Activated CD4-positive, alpha-beta memory T cell treated with anti-CD3 and anti-CD28 coated beads, Interleukin-2, amount 10 ng/mL, durations not matched to agents 7 days and 5 days (primary cell): ENCODE measurements at regions of chr20 and their contacts with region 1.

Region 1: GRCh38 chr20:40990542-40991120 is 38.0 kb upstream of the TOP1 start:
- DNase-seq: peak; percentile 78
- H3K4me3 Mint-ChIP-seq: no peak overlapping the region
- H3K27ac Mint-ChIP-seq: peak overlapping the region; percentile 63
- H3K4me1 Mint-ChIP-seq: peaks cover 39% of the 10 kb centered on the region
- H3K27me3 Mint-ChIP-seq: no peaks in the 10 kb centered on the region

Region 2: DNA sequence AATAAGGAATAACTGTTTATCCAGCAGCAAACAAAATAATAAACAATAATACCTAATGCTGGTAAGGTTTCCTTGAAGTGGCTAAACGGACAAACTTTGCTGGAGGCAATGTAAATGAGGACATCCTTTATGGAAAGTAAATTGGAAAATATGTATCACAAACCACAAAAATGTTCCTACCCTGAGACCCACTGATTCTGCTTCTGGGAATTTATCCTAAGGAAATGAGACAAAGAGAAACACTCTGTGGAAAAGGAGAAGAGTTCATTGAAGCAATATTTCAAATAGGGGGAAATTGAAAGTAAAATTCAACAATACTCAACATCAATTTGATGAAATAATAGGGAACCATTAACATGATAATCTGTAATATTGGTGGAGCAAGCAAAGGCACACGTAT is 339.5 kb before region 1 on chr20:
- CTCF ChIA-PET with region 1: no interaction called
- POLR2A ChIA-PET with region 1: no interaction called
- DNase-seq: no peak
- H3K4me3 Mint-ChIP-seq: no peak overlapping the region
- H3K27ac Mint-ChIP-seq: no peak overlapping the region
- H3K4me1 Mint-ChIP-seq: no peaks in the 10 kb centered on the region
- H3K27me3 Mint-ChIP-seq: peaks cover 2% of the 10 kb centered on the region

Region 3: DNA sequence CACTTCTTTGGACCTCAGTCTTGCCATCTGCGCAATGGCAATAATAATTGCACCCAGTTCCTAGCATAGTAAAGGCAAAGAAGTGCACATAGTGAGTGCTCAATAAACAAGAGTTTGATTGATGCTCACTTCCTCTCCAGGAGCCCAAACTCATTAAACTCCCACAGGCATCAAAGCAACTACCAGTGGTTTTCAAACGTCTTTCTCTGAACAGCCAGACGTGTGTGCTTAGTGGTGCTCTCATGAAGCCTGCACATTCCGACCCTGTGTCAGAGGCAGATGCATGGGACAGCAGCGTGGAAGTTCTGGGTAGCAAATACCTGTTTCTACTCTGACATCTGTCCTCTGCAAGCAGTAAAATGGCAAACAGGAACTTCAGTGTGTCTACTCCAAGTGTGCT is 155.3 kb before region 1 on chr20:
- CTCF ChIA-PET with region 1: no interaction called
- POLR2A ChIA-PET with region 1: no interaction called
- DNase-seq: no peak
- H3K4me3 Mint-ChIP-seq: no peak overlapping the region
- H3K27ac Mint-ChIP-seq: no peak overlapping the region
- H3K4me1 Mint-ChIP-seq: no peaks in the 10 kb centered on the region
- H3K27me3 Mint-ChIP-seq: peaks cover 12% of the 10 kb centered on the region

Region 4: DNA sequence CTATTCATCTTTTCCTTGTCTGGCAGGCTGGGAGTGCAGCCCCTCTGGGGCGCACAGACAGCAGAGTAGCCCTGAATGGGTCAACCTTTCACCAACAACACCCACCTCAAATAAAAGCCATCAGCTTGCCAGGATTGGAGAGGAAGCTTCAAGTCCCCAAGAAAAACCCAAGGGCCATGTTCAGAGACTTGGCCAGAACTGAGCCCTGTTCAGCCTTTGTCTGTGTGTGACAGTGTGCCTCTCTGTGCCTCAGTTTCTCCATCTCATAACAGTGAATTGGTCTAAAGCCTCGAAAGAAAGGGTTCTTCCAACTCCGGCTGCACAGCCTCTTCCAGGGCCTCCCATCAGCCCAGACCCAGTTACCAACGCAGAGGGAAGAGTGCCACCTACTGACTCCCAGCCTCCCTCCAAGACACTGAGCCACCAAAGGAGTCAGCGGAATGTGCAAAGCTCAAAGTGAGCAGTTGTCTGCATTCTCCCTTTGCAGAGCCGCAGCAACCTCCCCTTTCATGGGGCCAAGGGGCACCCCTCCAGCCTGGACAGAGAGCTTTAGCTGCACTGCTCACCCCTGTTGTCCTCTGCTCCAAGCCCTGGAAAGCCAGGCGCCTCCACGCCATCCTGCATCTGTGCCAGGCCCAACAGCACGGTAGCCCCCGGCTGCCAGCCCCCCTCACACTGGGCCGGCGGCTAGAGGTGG is 44.7 kb before region 1 on chr20:
- CTCF ChIA-PET with region 1: no interaction called
- POLR2A ChIA-PET with region 1: no interaction called
- DNase-seq: no peak
- H3K4me3 Mint-ChIP-seq: no peak overlapping the region
- H3K27ac Mint-ChIP-seq: no peak overlapping the region
- H3K4me1 Mint-ChIP-seq: no peaks in the 10 kb centered on the region
- H3K27me3 Mint-ChIP-seq: peaks cover 16% of the 10 kb centered on the region

Region 5: GRCh38 chr20:41003143-41003883 is 12.7 kb after region 1 on chr20:
- CTCF ChIA-PET with region 1: interaction called, 37 read pairs
- POLR2A ChIA-PET with region 1: interaction called, 13 read pairs
- DNase-seq: peak; percentile 78
- H3K4me3 Mint-ChIP-seq: peak overlapping the region; percentile 54
- H3K27ac Mint-ChIP-seq: peak overlapping the region; percentile 99
- H3K4me1 Mint-ChIP-seq: peaks cover 51% of the 10 kb centered on the region
- H3K27me3 Mint-ChIP-seq: no peaks in the 10 kb centered on the region

Region 6: GRCh38 chr20:41038878-41039404 is 48.3 kb after region 1 on chr20:
- CTCF ChIA-PET with region 1: interaction called, 36 read pairs
- POLR2A ChIA-PET with region 1: interaction called, 4 read pairs
- DNase-seq: no peak
- H3K4me3 Mint-ChIP-seq: no peak overlapping the region
- H3K27ac Mint-ChIP-seq: no peak overlapping the region
- H3K4me1 Mint-ChIP-seq: peaks cover 90% of the 10 kb centered on the region
- H3K27me3 Mint-ChIP-seq: no peaks in the 10 kb centered on the region

Region 7: GRCh38 chr20:41078329-41078728 is 87.7 kb after region 1 on chr20:
- CTCF ChIA-PET with region 1: interaction called, 74 read pairs
- POLR2A ChIA-PET with region 1: interaction called, 3 read pairs
- DNase-seq: no peak
- H3K4me3 Mint-ChIP-seq: no peak overlapping the region
- H3K27ac Mint-ChIP-seq: peak overlapping the region; percentile 30
- H3K4me1 Mint-ChIP-seq: peaks cover 65% of the 10 kb centered on the region
- H3K27me3 Mint-ChIP-seq: no peaks in the 10 kb centered on the region

Region 8: GRCh38 chr20:41119546-41120235 is 129.1 kb after region 1 on chr20:
- CTCF ChIA-PET with region 1: interaction called, 15 read pairs
- POLR2A ChIA-PET with region 1: no interaction called
- DNase-seq: no peak
- H3K4me3 Mint-ChIP-seq: no peak overlapping the region
- H3K27ac Mint-ChIP-seq: no peak overlapping the region
- H3K4me1 Mint-ChIP-seq: peaks cover 18% of the 10 kb centered on the region
- H3K27me3 Mint-ChIP-seq: no peaks in the 10 kb centered on the region